Right cardiac atrium (tissue), 5 donors: ENCODE measurements at regions of chr14 and their contacts with region 1.

Region 1: GRCh38 chr14:70821584-70822529 is 12.5 kb upstream of the MAP3K9 start:
- DNase-seq: peak; percentile 63 to 85 (median 83)
- ATAC-seq: peak; percentile 69 to 76
- H3K4me3 ChIP-seq: peak overlapping the region; percentile 58
- H3K27ac ChIP-seq: no peak overlapping the region
- H3K4me1 ChIP-seq: no peaks in the 10 kb centered on the region
- H3K27me3 ChIP-seq: no peaks in the 10 kb centered on the region

Region 2: DNA sequence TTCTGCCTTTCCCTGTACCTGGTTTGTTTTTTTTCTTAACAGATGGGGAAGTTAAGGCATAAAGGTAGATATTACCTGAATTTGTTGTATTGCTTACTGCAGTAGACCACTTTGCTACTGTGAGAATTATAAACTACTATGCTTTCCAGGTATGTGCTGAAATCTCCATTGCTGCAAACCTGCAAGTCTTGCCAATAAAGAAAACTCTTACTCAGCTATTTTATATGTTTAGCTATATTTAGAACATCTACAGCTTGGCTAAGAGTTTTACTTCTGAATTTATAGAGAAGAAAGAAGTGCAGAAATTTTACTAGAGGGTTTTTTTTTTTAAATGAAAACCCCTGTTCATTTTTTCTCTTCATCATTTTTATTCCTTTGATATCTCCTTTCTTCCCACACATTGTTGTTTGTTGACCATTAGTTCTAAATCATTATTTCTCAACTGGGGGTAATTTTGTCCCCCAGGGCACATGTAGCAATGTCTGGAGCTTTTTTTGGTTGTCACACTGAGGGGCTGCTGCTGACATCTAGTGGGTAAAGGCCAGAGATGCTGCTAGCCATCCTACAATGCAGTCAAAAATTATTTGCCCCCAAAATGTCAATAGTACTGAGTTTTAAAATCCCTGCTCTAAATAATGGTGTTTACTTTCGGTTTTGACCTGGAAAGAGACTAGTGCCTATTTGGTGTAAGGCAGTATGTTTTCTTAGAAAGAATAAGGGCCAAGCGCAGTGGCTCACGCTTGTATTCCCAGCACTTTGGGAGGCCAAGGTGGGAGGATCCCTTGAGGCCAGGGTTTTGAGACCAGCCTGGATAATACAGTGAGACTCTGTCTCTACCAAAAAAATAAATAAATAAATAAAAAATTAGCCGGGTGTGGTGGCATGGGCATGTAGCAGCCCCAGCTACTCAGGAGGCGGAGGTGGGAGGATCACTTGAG is 134.0 kb after region 1 on chr14:
- intact Hi-C with region 1: loop called in 1 of 4 experiments (anchors 5 kb)
- DNase-seq: no peak
- ATAC-seq: peak; percentile 43 to 55
- H3K4me3 ChIP-seq: no peak overlapping the region
- H3K27ac ChIP-seq: no peak overlapping the region
- H3K4me1 ChIP-seq: peaks cover 2% of the 10 kb centered on the region
- H3K27me3 ChIP-seq: no peaks in the 10 kb centered on the region

Region 3: DNA sequence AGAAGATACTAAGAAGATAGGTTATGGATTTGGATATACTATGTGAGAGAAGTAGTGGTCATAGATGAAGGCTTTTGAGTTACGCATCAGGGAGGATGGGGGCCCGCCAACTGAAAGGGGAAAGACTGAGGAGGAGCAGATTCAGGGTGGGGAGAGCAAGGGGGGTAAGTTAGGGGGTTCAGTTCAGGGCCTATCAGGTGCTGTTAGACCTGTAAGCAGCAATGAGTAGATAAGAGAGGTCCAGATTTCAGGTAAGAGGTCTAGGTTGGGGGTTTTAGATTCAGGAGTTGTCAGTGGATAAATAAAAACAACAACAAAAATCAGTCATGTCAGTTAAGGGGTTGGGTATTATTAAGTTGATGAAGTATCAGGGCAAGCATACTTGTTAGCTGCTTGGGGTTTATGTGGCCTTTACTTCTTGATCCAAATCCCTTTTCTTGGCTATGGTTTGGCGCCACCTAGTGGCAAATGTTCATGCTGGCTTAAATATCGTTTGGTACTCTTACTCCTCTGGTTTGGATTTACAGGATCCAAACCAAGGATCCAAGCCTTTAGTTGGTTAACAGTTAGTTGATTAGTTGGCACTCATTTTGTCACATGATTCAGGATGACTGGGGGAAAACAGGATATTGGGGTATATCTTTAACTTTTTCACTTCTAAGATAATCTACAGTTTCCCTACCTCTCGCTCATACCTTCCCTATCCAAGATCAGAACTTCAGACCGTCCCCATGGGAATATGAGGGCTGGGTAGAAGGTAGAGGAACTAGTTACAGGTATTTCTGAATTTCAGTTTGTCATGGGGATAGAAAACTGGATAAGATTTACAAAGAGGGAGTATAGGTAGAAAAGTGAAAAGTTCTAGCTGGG is 150.5 kb after region 1 on chr14:
- intact Hi-C with region 1: loop called in 3 of 4 experiments (anchors 2 to 5 kb)
- DNase-seq: peak; percentile 72 to 89 (median 75)
- ATAC-seq: peak; percentile 79 to 88
- H3K4me3 ChIP-seq: no peak overlapping the region
- H3K27ac ChIP-seq: no peak overlapping the region
- H3K4me1 ChIP-seq: no peaks in the 10 kb centered on the region
- H3K27me3 ChIP-seq: no peaks in the 10 kb centered on the region

Region 4: DNA sequence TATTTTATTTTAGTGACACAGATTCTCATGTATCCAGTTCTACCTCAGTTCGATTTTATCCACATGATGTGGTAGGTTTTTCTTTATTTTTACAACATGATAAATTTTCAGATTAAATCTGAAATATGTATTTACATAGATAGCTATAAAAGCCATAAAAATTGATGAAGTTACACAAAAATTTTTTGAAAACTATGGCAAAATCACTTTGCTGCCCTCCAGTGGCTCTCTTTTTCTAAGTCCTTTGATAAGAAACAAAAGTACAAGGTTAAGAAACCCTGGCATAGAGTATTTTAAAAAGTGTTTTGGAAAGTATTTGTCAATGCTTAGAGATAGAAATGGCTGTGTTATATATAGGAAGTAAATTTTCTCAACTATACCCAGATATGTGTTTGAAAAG is 189.6 kb after region 1 on chr14:
- intact Hi-C with region 1: no loop called
- DNase-seq: no peak
- ATAC-seq: no peak
- H3K4me3 ChIP-seq: no peak overlapping the region
- H3K27ac ChIP-seq: no peak overlapping the region
- H3K4me1 ChIP-seq: peaks cover 2% of the 10 kb centered on the region
- H3K27me3 ChIP-seq: no peaks in the 10 kb centered on the region